Esophagus muscularis mucosa (tissue), 4 donors: ENCODE measurements at regions of chr17 and their contacts with region 1.

Region 1: GRCh38 chr17:64129764-64130558 is at the start of gene ERN1:
- DNase-seq: peak; percentile 99
- H3K4me3 ChIP-seq: peak within 1 kb of the TSS; percentile 79 to 95 (median 88)
- H3K27ac ChIP-seq: peak within 1 kb of the TSS; percentile 94 to 99 (median 98)
- H3K4me1 ChIP-seq: peaks cover 27 to 42% (median 40%) of the 10 kb centered on the region in 4 donors
- H3K27me3 ChIP-seq: no peaks in the 10 kb centered on the region
- CTCF ChIP-seq: no peak
- EP300 ChIP-seq: no peak
- POLR2A ChIP-seq: peak; percentile 57
- total RNA-seq, gene ERN1: 6.2 to 11.2 (median 9.3) TPM

Region 2: GRCh38 chr17:63919311-63919723 is 210.6 kb before region 1 on chr17:
- intact Hi-C with region 1: loop called (anchors 10 kb)
- DNase-seq: no peak
- H3K4me3 ChIP-seq: no peak overlapping the region
- H3K27ac ChIP-seq: no peak overlapping the region
- H3K4me1 ChIP-seq: peaks cover 0 to 7% (median 3%) of the 10 kb centered on the region in 4 donors
- H3K27me3 ChIP-seq: peaks cover 0 to 13% (median 0%) of the 10 kb centered on the region in 4 donors
- CTCF ChIP-seq: peak; percentile 82 to 94 (median 88)
- EP300 ChIP-seq: no peak
- POLR2A ChIP-seq: no peak

Region 3: GRCh38 chr17:64025732-64026294 is 104.1 kb before region 1 on chr17:
- intact Hi-C with region 1: loop called (anchors 1 kb)
- DNase-seq: no peak
- H3K4me3 ChIP-seq: peak overlapping the region; percentile 9 to 47 (median 17)
- H3K27ac ChIP-seq: no peak overlapping the region
- H3K4me1 ChIP-seq: peaks cover 3 to 14% (median 11%) of the 10 kb centered on the region in 4 donors
- H3K27me3 ChIP-seq: peaks cover 0 to 6% (median 2%) of the 10 kb centered on the region in 4 donors
- CTCF ChIP-seq: peak; percentile 81 to 97 (median 87)
- EP300 ChIP-seq: no peak
- POLR2A ChIP-seq: no peak

Region 4: GRCh38 chr17:64041912-64042311 is 88.0 kb before region 1 on chr17:
- intact Hi-C with region 1: no loop called
- DNase-seq: no peak
- H3K4me3 ChIP-seq: no peak overlapping the region
- H3K27ac ChIP-seq: no peak overlapping the region
- H3K4me1 ChIP-seq: no peaks in the 10 kb centered on the region
- H3K27me3 ChIP-seq: no peaks in the 10 kb centered on the region
- CTCF ChIP-seq: no peak
- EP300 ChIP-seq: no peak
- POLR2A ChIP-seq: no peak

Region 5: DNA sequence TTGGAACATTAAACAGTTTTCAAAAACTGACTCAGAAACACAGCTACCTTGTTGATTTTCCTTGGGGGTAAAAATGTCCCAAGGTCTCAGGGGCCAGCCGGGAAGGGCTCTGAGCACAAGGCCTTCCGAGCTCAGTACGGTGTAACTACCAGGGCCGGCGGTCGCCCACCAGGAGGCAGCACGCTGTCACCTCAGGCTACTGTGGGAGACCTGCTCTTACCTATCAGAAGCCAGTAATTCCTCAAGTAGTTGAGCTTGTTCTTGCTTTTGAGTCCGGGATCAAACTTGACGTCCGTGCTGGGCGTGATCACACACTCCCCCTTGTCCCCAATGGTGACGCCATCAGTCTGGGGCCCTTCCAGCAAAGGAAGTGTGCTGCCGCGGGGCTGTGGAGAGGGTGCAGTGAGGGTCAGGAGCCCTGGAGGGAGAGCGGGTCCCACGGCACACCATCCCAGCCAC is 66.2 kb before region 1 on chr17:
- intact Hi-C with region 1: loop called (anchors 2 kb)
- DNase-seq: no peak
- H3K4me3 ChIP-seq: no peak overlapping the region
- H3K27ac ChIP-seq: no peak overlapping the region
- H3K4me1 ChIP-seq: no peaks in the 10 kb centered on the region
- H3K27me3 ChIP-seq: no peaks in the 10 kb centered on the region
- CTCF ChIP-seq: peak; percentile 56 to 58 (median 57)
- EP300 ChIP-seq: no peak
- POLR2A ChIP-seq: no peak

Region 6: DNA sequence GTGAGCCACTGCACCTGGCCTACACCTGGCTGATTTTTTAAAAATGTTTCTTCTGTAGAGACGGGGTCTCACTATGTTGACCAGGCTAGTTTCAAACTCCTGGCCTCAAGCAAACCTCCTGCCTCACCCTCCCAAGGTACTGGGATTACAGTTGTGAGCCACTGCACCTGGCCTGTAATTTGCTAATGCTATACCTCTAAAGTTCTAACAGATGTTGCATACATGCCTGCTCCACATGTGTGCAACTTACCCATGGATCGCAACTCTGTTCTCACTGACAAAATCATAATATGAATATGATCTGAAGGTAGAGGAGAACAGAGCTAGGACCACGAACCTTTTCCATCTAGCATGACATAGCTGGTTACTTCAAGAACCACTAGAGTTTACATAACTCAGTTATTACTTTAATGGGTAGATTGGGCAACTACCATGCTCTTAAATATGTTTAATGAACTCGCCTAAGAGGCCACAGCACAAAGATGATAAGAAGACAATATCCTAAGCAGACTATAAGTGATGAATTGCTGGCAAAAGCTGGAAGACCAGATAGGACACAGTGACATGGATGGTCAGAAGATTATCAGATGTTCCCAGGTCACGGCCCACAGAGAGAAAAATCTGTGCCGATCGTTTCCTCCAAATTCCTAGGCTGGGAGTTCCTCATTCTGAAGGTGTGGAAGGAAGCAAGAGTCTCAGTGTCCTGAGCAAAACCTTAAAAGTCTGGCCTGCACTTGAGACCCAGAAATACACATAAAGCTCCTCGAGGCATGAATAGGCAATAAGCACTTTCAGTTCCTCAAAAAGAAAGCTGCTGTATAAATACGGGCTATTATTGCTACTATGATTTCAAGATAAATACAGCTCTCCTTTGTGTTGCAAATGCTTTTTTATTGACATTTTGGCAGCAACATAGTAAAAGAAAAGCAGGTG is 55.9 kb before region 1 on chr17:
- intact Hi-C with region 1: no loop called
- DNase-seq: no peak
- H3K4me3 ChIP-seq: no peak overlapping the region
- H3K27ac ChIP-seq: peak overlapping the region; percentile 26 to 72 (median 42)
- H3K4me1 ChIP-seq: peaks cover 3 to 16% (median 13%) of the 10 kb centered on the region in 4 donors
- H3K27me3 ChIP-seq: no peaks in the 10 kb centered on the region
- CTCF ChIP-seq: no peak
- EP300 ChIP-seq: no peak
- POLR2A ChIP-seq: no peak

Region 7: DNA sequence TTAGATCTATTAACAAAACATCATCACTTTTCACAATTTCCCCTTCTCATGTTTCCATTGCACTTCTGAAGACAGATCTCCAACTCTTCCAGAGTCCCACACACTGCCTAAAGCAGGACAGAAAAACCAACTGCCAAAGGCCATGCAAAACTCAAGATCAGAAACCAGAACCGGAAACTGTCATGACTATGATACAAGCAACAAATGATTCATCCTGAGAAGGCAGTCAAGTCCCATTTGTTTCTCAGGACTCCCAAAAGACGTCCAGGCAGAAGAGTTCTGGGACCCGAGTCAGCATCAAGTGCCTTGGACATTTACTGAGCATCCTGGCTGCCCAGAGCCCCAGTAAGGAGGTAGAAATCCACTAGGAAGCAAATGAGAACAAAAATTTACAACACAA is 38.8 kb before region 1 on chr17:
- intact Hi-C with region 1: no loop called
- DNase-seq: no peak
- H3K4me3 ChIP-seq: no peak overlapping the region
- H3K27ac ChIP-seq: no peak overlapping the region
- H3K4me1 ChIP-seq: peaks cover 0 to 12% (median 8%) of the 10 kb centered on the region in 4 donors
- H3K27me3 ChIP-seq: no peaks in the 10 kb centered on the region
- CTCF ChIP-seq: no peak
- EP300 ChIP-seq: no peak
- POLR2A ChIP-seq: no peak